ENCODE measurements at regions of chr15 and their contacts with region 1.

Region 1: DNA sequence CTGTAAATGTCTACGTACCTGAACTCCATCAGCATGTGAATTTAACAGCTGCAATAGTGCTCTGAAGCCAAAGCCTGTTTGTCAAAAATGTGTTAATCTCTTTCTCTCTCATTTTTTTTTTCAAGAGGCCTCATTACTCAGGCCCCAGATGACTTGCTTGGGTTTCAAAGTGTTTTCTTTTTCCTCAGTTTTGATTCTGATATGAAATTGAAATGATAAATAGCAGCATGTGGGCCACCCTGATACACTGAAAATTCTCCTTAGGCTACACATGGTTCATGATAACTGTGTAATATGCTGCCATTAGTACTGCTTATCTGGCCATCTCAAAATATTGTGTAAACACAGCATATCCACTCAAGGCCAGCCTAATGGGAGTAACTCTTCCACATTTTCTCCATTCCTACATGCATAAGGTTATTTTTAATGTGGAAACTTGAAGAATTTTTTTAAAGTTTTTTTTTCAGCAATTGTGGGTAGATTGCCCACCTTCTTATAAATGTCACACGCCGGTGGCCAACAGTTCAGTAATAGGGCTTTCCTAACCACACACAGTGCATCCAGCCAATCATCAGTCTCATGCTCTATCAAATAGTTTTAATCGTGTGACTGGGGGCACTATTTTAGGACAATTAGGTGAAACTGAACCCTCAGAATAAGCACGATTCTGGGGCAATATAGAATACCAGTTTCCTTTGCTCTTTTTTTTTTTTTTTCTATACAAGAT is 13.1 kb upstream of the DENND4A start:
- DNase-seq: no peak
- H3K4me3 Mint-ChIP-seq: no peak overlapping the region
- H3K27ac Mint-ChIP-seq: peak overlapping the region; percentile 79
- H3K4me1 Mint-ChIP-seq: peaks cover 45% of the 10 kb centered on the region
- H3K27me3 Mint-ChIP-seq: no peaks in the 10 kb centered on the region

Region 2: DNA sequence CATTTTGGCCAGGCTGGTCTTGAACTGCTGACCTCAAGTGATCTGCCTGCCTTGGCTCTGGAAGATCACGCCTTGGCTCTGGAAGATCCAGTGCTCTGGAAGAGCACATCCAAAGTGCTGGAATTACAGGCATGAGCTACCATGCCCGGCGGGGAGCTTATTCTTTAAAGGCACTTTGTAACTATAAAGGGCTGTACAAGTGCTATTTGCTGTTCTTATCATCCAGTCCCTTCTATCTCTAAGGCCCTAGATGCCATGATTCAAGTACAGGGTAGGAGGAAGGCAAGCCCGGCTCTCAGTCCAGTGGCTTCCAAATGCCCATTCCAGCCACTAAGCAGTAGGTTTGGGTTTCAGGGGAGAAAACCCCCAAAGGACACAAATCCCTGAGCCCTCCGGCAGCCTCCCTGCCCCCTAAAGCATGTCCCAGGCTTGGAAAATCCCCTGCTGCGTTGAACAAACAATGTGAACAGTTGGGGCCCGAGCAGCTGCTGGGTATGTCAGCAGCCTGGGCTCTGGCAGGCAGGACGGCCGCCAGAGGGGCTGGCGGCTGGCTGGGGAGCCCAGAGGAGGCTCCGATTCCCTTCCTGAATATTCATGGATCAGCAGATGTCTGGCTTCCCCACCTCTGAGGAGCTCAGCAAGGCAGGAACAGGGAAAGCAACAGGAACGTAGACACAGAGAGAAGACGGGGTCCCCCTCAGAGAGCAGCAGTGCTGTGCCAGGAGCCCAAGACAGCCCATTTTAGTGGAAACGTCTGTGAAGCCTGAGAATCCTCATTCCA is 390.2 kb before region 1 on chr15:
- intact Hi-C with region 1: no loop called
- DNase-seq: no peak
- H3K4me3 Mint-ChIP-seq: no peak overlapping the region
- H3K27ac Mint-ChIP-seq: no peak overlapping the region
- H3K4me1 Mint-ChIP-seq: no peaks in the 10 kb centered on the region
- H3K27me3 Mint-ChIP-seq: peaks cover 40% of the 10 kb centered on the region

Region 3: DNA sequence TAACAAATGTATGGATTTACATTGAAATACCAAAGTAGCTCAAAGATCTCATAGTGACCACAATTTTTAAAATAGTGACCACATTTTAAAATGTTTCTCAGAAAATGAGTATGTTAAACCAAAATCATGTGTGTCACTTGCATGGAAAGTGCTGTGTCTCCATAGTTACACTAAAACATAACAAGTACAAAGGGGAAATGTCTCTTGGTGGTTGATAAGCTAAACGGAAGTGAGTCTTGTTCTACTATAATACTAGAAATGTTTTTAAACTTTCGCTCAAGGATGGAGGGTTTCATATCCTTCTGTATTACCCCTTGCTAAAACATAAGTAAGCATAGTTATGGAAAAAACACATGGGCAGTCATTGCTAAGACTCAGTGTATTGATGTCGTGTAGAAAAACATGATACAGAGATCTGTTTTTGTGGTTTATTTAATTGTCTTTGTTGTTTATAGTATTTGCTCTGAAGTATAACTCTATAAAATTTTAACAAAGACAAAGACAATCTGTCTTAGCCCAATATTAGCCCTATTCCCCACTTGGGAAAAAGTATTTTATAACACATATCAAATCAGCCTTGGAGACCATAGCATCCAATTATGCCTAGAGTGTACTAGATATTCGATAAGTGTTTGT is 13.9 kb after region 1 on chr15:
- intact Hi-C with region 1: loop called (anchors 1 kb)
- DNase-seq: no peak
- H3K4me3 Mint-ChIP-seq: peak overlapping the region; percentile 59
- H3K27ac Mint-ChIP-seq: peak overlapping the region; percentile 85
- H3K4me1 Mint-ChIP-seq: peaks cover 44% of the 10 kb centered on the region
- H3K27me3 Mint-ChIP-seq: no peaks in the 10 kb centered on the region

Region 4: DNA sequence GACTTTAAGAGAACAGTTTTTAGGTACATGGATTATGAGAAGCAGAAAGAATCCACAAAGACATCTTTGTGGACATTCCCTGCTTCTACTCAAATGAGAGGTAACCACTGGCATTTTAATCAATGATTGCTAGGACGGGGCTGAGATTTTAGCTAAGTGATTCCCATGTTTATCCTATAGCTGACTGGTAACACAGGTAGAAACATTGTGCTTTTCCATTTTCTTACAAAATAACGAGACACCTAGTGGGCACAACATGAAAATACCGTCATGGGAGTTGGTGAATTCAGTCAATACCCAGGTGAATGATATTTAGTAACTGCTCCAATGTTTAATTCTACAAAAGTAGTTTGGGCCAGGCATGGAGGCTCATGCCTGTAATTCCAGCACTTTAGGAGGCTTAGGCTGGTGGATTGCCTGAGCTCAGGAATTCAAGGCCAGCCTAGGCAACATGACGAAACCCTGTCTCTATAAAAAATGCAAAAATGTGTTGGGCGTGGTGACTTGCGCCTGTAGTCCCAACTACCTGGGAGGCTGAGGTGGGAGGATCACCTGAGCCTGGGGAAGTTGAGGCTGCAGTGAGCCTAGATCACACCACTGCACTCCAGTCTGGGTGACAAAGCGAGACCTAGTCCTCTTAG is 24.1 kb after region 1 on chr15:
- intact Hi-C with region 1: loop called (anchors 1 kb)
- DNase-seq: no peak
- H3K4me3 Mint-ChIP-seq: no peak overlapping the region
- H3K27ac Mint-ChIP-seq: peak overlapping the region; percentile 73
- H3K4me1 Mint-ChIP-seq: peaks cover 54% of the 10 kb centered on the region
- H3K27me3 Mint-ChIP-seq: no peaks in the 10 kb centered on the region